Activated CD4-positive, alpha-beta T cell treated with anti-CD3 and anti-CD28 coated beads, Interleukin-2, amount 10 ng/mL, durations not matched to agents 7 days and 5 days (primary cell): ENCODE measurements at regions of chr3 and their contacts with region 1.

Region 1: GRCh38 chr3:150763122-150763841 is at the start of gene SIAH2:
- DNase-seq: peak; percentile 93
- H3K4me3 Mint-ChIP-seq: peak within 1 kb of the TSS; percentile 93
- H3K27ac Mint-ChIP-seq: peak within 1 kb of the TSS; percentile 100
- H3K4me1 Mint-ChIP-seq: peaks cover 45% of the 10 kb centered on the region
- H3K27me3 Mint-ChIP-seq: no peaks in the 10 kb centered on the region
- total RNA-seq, gene SIAH2: 30.9 to 40.8 TPM

Region 2: DNA sequence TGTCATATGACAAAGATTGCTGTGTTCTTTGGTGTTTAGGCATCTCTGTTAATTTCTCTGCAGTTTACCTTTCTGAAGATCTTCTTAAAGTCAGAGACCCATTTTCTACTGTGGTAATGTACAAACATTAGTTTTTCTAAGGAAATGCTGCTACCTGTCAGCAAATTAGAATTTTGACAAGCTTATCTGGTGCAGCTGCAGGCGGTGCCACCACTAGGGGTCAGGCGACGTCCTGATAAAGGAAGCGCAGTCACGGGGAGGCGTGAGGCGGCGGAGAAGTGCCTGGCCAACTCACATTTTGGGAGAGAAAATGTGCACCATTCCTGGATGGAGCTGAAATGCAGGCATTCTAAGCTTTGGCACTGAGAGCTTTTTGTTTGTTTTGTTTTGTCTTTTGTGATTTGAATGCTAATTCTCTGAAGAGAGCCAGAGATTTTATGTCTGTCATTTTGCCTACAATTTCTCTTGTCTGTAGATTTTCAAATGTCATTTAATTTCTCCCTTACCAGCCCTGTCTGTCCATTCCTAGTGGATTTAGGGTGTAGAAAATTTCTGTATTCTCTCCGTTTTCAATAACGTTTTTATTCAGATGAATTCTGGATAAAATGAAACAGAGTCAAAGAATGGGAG is 24.6 kb after region 1 on chr3:
- CTCF ChIA-PET with region 1: interaction called, 13 read pairs
- POLR2A ChIA-PET with region 1: no interaction called
- DNase-seq: peak; percentile 83
- H3K4me3 Mint-ChIP-seq: no peak overlapping the region
- H3K27ac Mint-ChIP-seq: no peak overlapping the region
- H3K4me1 Mint-ChIP-seq: peaks cover 29% of the 10 kb centered on the region
- H3K27me3 Mint-ChIP-seq: peaks cover 2% of the 10 kb centered on the region